ENCODE measurements at regions of chr19 and their contacts with region 1.

Region 1: GRCh38 chr19:39110263-39110967 is 15.2 kb upstream of the PAK4 start:
- H3K4me3 ChIP-seq: no peak overlapping the region
- H3K27ac ChIP-seq: no peak overlapping the region
- H3K4me1 ChIP-seq: peaks cover 7% of the 10 kb centered on the region; the same call in 1 of the 2 replicates
- CTCF ChIP-seq: peak; percentile 97

Region 2: DNA sequence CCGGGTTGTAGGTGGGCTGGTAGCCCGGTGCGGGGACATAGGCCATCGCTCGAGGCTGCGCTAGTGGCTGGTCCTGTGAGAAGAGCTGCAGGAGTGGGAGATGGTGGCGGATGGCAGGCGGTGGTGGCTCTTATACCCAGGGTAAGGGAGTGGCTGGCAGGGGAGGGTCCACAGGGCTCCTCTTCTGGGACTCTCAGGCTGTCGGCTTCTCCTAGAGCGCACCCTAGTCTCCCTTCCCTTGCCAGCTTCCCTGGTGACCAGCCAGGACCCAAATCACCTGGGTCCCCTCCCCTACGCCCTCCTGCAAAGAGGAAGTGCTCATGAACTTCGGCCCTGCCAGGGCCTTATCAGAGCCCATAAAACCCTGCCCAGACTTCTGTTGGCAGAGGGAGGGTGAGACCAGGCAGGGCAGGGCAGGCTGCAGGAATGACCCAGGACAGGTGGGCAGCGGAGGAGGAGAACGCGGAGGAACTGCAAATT is 297.5 kb before region 1 on chr19 and contains the start of gene LGALS4:
- CTCF ChIA-PET with region 1: no interaction called
- POLR2A ChIA-PET with region 1: no interaction called
- H3K4me3 ChIP-seq: no peak within 1 kb of the TSS
- H3K27ac ChIP-seq: no peak within 1 kb of the TSS
- H3K4me1 ChIP-seq: no peaks in the 10 kb centered on the region
- CTCF ChIP-seq: no peak

Region 3: DNA sequence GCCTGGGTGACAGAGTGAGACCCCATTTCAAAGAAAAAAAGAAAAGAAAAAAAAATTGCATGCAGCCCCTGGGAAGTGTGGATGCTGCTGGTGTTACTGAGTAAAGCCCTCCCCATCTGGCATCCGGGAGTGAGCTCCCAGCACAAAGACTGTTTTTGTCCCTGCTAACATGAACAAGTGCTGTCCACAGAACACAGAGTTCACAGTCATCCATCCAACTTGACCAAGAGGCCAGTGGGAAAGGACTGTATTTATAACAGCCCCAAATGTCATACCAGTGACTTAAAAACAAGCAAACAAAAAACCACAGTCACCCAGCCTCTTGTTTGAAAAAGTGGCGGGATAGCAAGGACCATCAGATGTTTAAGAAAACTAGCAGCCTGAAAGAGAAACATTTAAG is 145.7 kb before region 1 on chr19:
- CTCF ChIA-PET with region 1: interaction called, 22 read pairs
- POLR2A ChIA-PET with region 1: no interaction called
- H3K4me3 ChIP-seq: no peak overlapping the region
- H3K27ac ChIP-seq: no peak overlapping the region
- H3K4me1 ChIP-seq: peaks cover 8% of the 10 kb centered on the region
- CTCF ChIP-seq: no peak

Region 4: DNA sequence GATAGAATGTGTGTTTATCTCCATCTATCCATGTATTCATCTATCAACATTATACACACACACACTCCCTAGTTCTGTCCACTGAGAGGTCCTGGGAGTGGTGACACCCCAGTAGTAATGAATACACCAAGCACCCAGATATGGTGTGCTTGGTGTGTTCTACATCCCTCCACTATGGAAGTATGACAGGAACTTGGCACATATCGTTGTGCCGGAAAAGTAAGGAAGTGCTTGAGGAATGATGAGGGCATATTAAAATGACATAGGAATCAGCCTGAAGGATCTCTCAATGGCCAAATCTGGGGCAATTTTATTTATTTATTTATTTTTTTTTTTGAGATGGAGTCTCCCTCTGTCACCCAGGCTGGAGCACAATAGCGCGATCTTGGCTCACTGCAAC is 106.6 kb before region 1 on chr19:
- CTCF ChIA-PET with region 1: no interaction called
- POLR2A ChIA-PET with region 1: no interaction called
- H3K4me3 ChIP-seq: no peak overlapping the region
- H3K27ac ChIP-seq: no peak overlapping the region
- H3K4me1 ChIP-seq: no peaks in the 10 kb centered on the region
- CTCF ChIP-seq: no peak

Region 5: DNA sequence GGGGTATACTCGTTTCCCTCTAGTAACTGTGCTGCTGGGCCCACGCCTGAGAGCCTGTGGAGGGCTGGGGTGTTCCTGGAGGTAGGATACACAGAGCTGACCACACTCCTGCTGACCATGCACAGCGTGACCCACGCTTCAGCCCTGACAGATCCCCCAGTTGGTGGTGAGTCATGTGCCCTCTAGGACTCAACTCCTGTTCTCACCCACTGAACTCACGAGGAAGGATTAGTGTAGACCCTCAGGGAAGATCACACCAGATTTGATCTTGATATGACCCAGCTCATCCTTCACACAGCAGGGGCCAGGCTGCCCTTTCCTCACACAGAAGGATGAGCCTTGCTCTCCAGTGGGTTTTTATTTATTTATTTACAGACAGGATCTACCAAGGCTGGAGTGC is 39.5 kb before region 1 on chr19:
- CTCF ChIA-PET with region 1: interaction called, 20 read pairs
- POLR2A ChIA-PET with region 1: no interaction called
- H3K4me3 ChIP-seq: no peak overlapping the region
- H3K27ac ChIP-seq: no peak overlapping the region
- H3K4me1 ChIP-seq: no peaks in the 10 kb centered on the region
- CTCF ChIP-seq: no peak

Region 6: GRCh38 chr19:39090881-39091280 is 19.5 kb before region 1 on chr19:
- CTCF ChIA-PET with region 1: interaction called, 20 read pairs
- POLR2A ChIA-PET with region 1: no interaction called
- H3K4me3 ChIP-seq: no peak overlapping the region
- H3K27ac ChIP-seq: no peak overlapping the region
- H3K4me1 ChIP-seq: no peaks in the 10 kb centered on the region
- CTCF ChIP-seq: no peak

Region 7: DNA sequence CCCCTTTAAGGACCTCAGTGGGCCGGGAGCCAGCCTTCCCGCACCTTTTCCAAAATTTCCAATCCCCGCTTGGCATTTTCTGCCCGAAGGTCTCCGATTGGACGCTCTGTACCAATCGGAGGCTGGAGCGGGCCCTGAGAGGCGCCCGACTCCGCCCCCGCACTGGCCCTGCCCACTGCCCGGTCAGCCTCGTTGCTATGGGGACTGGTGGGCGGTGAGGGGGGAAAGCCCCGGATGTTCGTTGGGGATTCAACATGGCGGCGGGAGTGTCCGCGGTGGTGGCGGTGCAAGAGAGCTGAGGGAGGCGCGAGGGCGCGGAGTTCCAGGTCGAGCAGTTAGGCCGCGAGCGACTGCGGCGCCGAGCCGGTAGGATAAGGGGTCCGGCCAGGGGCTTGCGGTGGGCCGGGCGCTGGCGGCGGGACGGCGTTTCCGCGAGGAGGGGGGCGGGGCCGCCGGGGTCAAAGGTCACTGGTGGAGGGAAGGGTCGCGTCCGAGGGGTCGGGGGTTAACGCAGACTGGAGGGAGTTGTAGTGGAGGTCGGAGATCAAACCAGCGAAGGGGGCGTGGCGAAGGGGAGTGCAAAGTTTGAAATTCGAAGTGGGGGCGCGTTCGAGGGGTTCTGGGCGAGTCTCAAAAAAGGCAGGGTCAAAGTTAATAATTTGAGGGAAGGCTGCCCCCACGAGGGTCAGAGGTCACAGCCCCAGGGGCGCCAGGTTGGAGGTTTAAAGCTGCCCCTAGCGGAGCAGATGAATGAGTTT is 15.3 kb after region 1 on chr19 and contains the start of gene PAK4:
- CTCF ChIA-PET with region 1: interaction called, 86 read pairs
- POLR2A ChIA-PET with region 1: interaction called, 5 read pairs
- H3K4me3 ChIP-seq: peak within 1 kb of the TSS; percentile 67
- H3K27ac ChIP-seq: peak within 1 kb of the TSS; percentile 88
- H3K4me1 ChIP-seq: peaks cover 24% of the 10 kb centered on the region
- CTCF ChIP-seq: peak; percentile 91

Region 8: DNA sequence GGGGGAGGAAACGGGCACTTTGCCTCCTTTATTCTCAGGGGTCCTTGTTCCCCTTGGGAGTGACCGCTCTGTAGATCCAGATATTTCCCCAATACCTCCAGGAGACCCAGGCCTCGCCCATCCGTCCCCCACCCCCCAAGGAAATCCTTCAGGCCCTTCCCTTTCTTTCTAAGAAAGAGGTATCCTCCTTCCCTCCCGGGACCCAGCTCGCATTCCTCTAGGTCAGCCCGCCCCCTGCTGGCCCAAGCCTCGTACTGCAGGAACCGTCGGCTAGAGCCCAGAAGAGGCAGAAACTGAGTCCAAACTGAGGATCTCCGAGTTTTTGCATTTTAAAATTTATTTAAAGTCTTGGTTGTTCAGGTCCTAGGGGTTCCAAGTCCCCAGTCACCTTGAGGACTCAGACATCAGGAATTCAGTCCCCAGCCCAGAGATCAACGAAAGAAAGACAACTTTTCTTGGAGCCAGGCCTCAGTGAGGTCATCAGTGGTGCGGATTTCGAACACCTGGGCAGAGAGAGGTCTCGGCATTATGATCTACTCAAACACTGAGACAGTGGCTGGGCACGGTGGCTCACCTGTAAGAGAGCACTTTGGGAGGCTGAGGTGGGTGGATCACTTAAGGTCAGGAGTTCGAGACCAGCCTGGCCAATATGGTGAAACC is 217.8 kb after region 1 on chr19:
- CTCF ChIA-PET with region 1: interaction called, 79 read pairs
- POLR2A ChIA-PET with region 1: no interaction called
- H3K4me3 ChIP-seq: no peak overlapping the region
- H3K27ac ChIP-seq: no peak overlapping the region
- H3K4me1 ChIP-seq: no peaks in the 10 kb centered on the region; the same call in 1 of the 2 replicates
- CTCF ChIP-seq: peak; percentile 95